Natural killer cell (primary cell): ENCODE measurements at regions of chr3 and their contacts with region 1.

Region 1: DNA sequence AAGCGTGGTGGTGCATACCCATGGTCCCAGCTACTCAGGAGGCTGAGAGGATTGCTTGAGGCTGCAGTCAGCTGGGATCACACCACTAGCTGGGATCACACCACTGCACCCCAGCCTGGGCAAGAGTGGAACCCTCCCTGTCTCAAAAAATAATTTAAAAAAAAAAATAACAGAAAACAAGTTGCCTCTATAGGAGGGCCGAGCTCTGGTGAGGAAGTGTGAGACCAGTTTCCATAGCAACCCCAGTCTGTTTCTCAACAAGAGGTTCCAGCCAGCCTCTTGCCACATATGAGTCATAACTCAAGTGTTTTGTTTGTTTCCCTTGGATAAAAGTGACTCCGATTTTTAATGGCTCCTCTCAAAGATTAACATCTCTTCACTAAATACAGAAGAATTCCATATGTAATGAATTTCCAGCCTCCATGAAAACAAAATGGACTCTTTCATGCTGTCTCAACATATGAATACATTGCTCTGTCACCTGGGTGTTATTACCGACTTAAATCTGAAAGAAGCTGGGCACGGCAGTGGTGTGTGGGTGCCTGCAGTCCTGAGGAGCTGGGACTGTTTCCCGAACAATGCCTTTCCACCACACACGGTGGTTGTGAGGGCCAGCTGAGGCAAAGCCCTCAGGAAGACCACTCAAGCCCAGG is 19.7 kb downstream of the TMEM43 start:
- DNase-seq: peak; percentile 77 to 96
- ATAC-seq: peak; percentile 70 to 90 (median 76)
- H3K4me3 ChIP-seq: peak overlapping the region; percentile 4
- H3K4me3 Mint-ChIP-seq: peak overlapping the region; percentile 84
- H3K27ac ChIP-seq: peak overlapping the region; percentile 97
- H3K27ac Mint-ChIP-seq: peak overlapping the region; percentile 95 to 100
- H3K4me1 ChIP-seq: peaks cover 52% of the 10 kb centered on the region
- H3K4me1 Mint-ChIP-seq: peaks cover 48 to 57% of the 10 kb centered on the region in 2 donors
- H3K27me3 ChIP-seq: no peaks in the 10 kb centered on the region
- H3K27me3 Mint-ChIP-seq: no peaks in the 10 kb centered on the region
- CTCF ChIP-seq: no peak

Region 2: GRCh38 chr3:13574798-13575451 is 569.6 kb before region 1 on chr3:
- intact Hi-C with region 1: no loop called
- DNase-seq: no peak
- ATAC-seq: no peak
- H3K4me3 ChIP-seq: no peak overlapping the region
- H3K4me3 Mint-ChIP-seq: no peak overlapping the region
- H3K27ac ChIP-seq: no peak overlapping the region
- H3K27ac Mint-ChIP-seq: no peak overlapping the region
- H3K4me1 ChIP-seq: no peaks in the 10 kb centered on the region
- H3K4me1 Mint-ChIP-seq: no peaks in the 10 kb centered on the region
- H3K27me3 ChIP-seq: no peaks in the 10 kb centered on the region
- H3K27me3 Mint-ChIP-seq: no peaks in the 10 kb centered on the region
- CTCF ChIP-seq: no peak

Region 3: GRCh38 chr3:13895155-13896105 is 249.1 kb before region 1 on chr3:
- intact Hi-C with region 1: loop called (anchors 2 kb)
- DNase-seq: peak; percentile 95 to 96
- ATAC-seq: peak; percentile 98 to 99 (median 98)
- H3K4me3 ChIP-seq: peak overlapping the region; percentile 72
- H3K4me3 Mint-ChIP-seq: peak overlapping the region; percentile 76
- H3K27ac ChIP-seq: peak overlapping the region; percentile 69
- H3K27ac Mint-ChIP-seq: peak overlapping the region; percentile 86 to 92
- H3K4me1 ChIP-seq: peaks cover 30% of the 10 kb centered on the region
- H3K4me1 Mint-ChIP-seq: peaks cover 21 to 26% of the 10 kb centered on the region in 2 donors
- H3K27me3 ChIP-seq: no peaks in the 10 kb centered on the region
- H3K27me3 Mint-ChIP-seq: peaks cover 0 to 6% of the 10 kb centered on the region in 2 donors
- CTCF ChIP-seq: no peak

Region 4: DNA sequence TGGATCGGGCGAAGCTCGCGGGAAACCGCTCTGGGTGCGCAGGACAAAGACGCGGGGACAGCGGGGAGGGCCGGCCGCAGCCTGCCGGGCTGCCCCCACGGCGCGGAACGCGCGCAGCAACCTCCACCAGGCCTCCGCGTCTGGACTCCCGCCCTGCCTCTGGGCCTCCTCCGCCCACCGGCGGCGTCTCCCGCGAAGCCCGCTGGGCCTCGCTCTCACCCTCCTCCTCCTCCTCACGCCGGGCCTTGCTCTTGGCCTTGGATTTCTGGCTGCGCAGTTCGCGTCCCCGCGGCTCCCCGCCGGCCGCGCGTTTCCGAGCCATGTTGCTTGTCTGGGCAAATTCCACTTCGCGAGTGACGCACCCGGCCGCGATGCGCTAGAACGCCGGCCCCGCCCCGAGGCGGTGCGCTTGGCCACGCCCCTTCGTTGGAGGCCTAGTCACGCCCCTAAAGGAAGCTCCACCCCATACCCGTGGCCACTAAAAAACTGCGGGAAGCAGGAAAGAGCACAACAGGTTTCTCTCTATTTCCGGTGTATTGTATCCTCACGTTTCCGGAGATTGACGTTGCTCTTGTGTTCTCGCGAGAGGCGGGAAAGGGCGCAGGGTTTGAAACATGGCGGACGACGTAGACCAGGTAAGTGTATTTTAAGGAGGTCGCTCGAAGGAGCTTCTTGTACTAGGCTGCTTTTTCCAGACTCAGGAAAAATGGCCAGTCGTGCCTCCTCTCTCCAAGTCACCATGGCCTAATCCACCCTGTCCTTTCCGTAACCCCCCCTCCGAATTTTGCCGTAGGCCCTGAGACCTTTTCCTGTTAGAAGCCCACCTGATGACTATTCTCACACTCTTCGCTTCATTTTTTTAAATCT is 33.9 kb after region 1 on chr3 and contains the starts of genes LSM3 and XPC:
- intact Hi-C with region 1: loop called (anchors 1 kb)
- DNase-seq: peak; percentile 98 to 99
- ATAC-seq: peak; percentile 94 to 99 (median 94)
- H3K4me3 ChIP-seq: peak within 1 kb of the TSS; percentile 72
- H3K4me3 Mint-ChIP-seq: peak within 1 kb of the TSS; percentile 100
- H3K27ac ChIP-seq: peak within 1 kb of the TSS; percentile 91
- H3K27ac Mint-ChIP-seq: peak within 1 kb of the TSS; percentile 99 to 100
- H3K4me1 ChIP-seq: peaks cover 30% of the 10 kb centered on the region
- H3K4me1 Mint-ChIP-seq: peaks cover 61 to 66% of the 10 kb centered on the region in 2 donors
- H3K27me3 ChIP-seq: no peaks in the 10 kb centered on the region
- H3K27me3 Mint-ChIP-seq: no peaks in the 10 kb centered on the region
- CTCF ChIP-seq: no peak
- total RNA-seq, gene LSM3: 7.6 to 9.1 (median 8.9) TPM
- total RNA-seq, gene XPC: 45.5 to 62.1 (median 50.0) TPM

Region 5: DNA sequence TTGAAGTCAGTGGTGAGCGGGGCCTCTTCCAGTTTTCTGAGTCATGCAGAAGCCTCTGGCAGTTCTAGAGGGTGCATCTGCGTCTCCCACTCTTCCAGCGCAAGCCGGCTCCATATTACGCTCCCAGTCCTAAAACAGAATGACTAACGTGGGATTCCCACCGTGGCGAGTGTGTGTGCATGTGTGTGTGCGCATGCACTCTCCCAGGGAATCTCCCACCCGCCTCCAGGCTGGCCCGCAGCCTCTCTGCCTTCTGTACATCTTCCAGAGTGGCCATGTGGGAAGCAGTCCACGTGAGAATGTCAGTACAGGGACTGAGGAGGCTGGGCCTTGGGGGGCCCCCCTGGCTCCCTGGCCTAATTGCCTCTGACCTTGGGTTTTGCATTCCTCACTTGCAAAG is 121.8 kb after region 1 on chr3:
- intact Hi-C with region 1: no loop called
- DNase-seq: no peak
- ATAC-seq: no peak
- H3K4me3 ChIP-seq: no peak overlapping the region
- H3K4me3 Mint-ChIP-seq: no peak overlapping the region
- H3K27ac ChIP-seq: no peak overlapping the region
- H3K27ac Mint-ChIP-seq: no peak overlapping the region
- H3K4me1 ChIP-seq: no peaks in the 10 kb centered on the region
- H3K4me1 Mint-ChIP-seq: no peaks in the 10 kb centered on the region
- H3K27me3 ChIP-seq: no peaks in the 10 kb centered on the region
- H3K27me3 Mint-ChIP-seq: peaks cover 0 to 9% of the 10 kb centered on the region in 2 donors
- CTCF ChIP-seq: no peak

Region 6: GRCh38 chr3:14431892-14432834 is 287.6 kb after region 1 on chr3:
- intact Hi-C with region 1: loop called (anchors 2 kb)
- DNase-seq: peak; percentile 91 to 96
- ATAC-seq: peak; percentile 75 to 93 (median 85)
- H3K4me3 ChIP-seq: peak overlapping the region; percentile 15
- H3K4me3 Mint-ChIP-seq: peak overlapping the region; percentile 73
- H3K27ac ChIP-seq: peak overlapping the region; percentile 97
- H3K27ac Mint-ChIP-seq: peak overlapping the region; percentile 96 to 97
- H3K4me1 ChIP-seq: peaks cover 96% of the 10 kb centered on the region
- H3K4me1 Mint-ChIP-seq: peaks cover 76 to 85% of the 10 kb centered on the region in 2 donors
- H3K27me3 ChIP-seq: no peaks in the 10 kb centered on the region
- H3K27me3 Mint-ChIP-seq: no peaks in the 10 kb centered on the region
- CTCF ChIP-seq: no peak

Region 7: DNA sequence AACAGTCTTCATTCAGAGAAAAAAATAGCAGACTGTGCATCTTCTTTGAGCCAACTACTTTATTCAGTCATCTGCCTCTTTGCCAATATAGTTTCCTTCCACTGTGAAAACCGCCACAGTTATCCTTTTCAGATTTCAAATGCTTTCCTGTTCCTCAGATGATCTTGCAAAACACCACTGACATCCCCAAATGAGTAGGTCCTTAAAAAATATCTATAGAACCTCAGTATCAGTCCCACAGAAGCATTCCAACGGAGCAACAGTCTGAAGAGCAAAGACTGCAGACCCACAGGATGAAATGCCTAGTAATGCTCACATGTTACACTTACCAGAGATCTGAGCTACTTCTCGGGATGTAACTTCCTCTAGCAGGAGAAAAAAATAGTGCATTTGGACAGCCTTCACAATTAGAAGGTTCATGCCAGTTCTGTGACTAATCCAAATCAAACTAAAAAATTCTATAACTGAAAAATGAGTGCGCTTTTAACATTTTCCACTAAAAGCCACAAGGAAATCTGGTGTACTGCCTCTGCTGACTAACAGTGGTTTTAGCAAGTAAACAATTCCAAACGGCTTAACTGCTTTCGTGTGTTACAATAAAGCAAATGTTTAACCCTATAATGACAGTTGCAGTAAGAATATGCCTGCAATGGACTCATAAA is 1653.2 kb after region 1 on chr3 and contains the start of gene ANKRD28:
- intact Hi-C with region 1: loop called (anchors 10 kb)
- DNase-seq: peak in 1 of 2 donors; percentile 59
- ATAC-seq: peak; percentile 40 to 51 (median 40)
- H3K4me3 ChIP-seq: peak within 1 kb of the TSS; percentile 28
- H3K4me3 Mint-ChIP-seq: peak within 1 kb of the TSS; percentile 91
- H3K27ac ChIP-seq: peak within 1 kb of the TSS; percentile 92
- H3K27ac Mint-ChIP-seq: peak within 1 kb of the TSS; percentile 91 to 92
- H3K4me1 ChIP-seq: peaks cover 12% of the 10 kb centered on the region
- H3K4me1 Mint-ChIP-seq: peaks cover 74 to 80% of the 10 kb centered on the region in 2 donors
- H3K27me3 ChIP-seq: no peaks in the 10 kb centered on the region
- H3K27me3 Mint-ChIP-seq: no peaks in the 10 kb centered on the region
- CTCF ChIP-seq: peak; percentile 12
- total RNA-seq, gene ANKRD28: 58.0 to 99.7 (median 91.7) TPM